Activated CD4-positive, alpha-beta T cell treated with anti-CD3 and anti-CD28 coated beads, Interleukin-2, amount 10 ng/mL, durations not matched to agents 24 days and 14 days (primary cell): ENCODE measurements at regions of chr3 and their contacts with region 1.

Region 1: DNA sequence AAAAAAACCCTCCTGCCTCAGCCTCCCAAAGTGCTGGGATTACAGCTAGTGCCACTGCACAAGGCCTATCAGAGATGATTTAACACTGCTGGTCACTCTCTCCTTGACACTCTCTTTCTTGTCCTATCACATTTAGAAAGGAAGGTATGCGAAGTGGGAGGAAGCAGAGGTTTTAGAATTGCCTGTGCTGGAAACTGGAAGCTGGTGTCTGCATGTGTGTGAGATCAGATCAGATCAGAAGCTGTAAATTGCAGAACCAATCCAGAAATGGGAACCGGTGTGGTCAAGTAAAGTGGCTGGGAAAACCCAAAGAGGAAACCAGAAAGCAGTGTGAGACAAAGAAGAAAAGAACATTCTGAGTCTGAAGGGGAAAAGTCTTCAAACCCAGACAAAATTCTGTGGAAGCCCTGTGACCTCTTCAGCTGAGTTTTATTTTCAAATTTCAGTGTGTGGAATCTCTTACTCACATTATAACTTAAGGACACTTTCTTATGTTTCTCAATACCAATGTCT is 2.8 kb downstream of the EFHB start:
- DNase-seq: peak; percentile 73
- H3K4me3 Mint-ChIP-seq: peak overlapping the region; percentile 52
- H3K27ac Mint-ChIP-seq: peak overlapping the region; percentile 93
- H3K4me1 Mint-ChIP-seq: peaks cover 35% of the 10 kb centered on the region
- H3K27me3 Mint-ChIP-seq: peaks cover 2% of the 10 kb centered on the region

Region 2: DNA sequence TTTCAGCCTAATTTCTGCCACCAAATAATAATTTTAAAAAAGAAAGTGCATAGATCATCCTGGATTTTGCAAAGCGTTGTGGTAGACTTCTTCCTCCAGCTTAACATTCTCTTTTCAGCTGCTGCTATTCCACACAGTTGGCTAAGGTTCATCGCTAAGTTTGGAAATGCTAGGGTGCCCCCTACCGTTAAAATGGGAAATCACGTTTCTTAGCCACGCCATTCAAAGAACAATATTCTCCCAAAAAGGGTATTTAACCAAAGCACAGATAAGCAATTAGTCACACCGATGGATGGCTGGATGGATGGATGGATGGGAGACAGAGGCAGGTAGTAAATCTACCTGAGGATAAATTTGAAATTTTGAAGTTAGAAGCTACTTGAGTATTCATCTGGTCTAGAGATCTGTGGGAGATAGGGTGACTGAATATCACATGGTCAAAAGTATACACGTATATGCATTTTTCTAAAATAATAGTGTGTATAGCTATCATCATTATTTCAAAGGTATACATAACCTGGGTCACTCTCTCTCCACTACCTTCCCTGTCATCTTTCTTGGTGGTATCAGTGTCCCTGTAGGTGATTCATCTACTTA is 64.4 kb before region 1 on chr3:
- intact Hi-C with region 1: no loop called
- DNase-seq: peak; percentile 81
- H3K4me3 Mint-ChIP-seq: no peak overlapping the region
- H3K27ac Mint-ChIP-seq: no peak overlapping the region
- H3K4me1 Mint-ChIP-seq: no peaks in the 10 kb centered on the region
- H3K27me3 Mint-ChIP-seq: peaks cover 15% of the 10 kb centered on the region

Region 3: DNA sequence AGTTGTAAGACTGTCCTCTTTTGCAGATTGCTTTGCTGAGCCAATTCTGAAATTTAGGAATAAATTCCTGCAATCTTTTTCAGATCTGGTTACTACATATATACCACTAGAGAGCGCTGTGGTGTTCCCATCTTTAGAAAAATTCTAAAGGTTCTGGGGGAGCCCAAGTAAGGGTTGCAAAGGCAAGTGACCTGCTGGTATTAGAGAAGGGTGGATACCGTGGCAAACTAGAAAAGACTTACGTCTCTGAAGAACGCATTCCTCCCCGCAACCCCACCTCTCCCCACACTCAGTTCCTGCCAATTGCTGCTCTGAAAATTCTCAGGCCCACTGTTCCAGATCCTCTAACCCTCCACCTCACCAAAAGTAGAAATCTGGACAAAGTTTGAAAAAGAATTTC is 45.8 kb before region 1 on chr3:
- intact Hi-C with region 1: loop called (anchors 2 kb)
- DNase-seq: peak; percentile 63
- H3K4me3 Mint-ChIP-seq: no peak overlapping the region
- H3K27ac Mint-ChIP-seq: no peak overlapping the region
- H3K4me1 Mint-ChIP-seq: peaks cover 6% of the 10 kb centered on the region
- H3K27me3 Mint-ChIP-seq: no peaks in the 10 kb centered on the region

Region 4: GRCh38 chr3:20039766-20040475 is 108.7 kb after region 1 on chr3 and contains the start of gene KAT2B:
- intact Hi-C with region 1: loop called (anchors 1 kb)
- DNase-seq: peak; percentile 94
- H3K4me3 Mint-ChIP-seq: peak within 1 kb of the TSS; percentile 96
- H3K27ac Mint-ChIP-seq: peak within 1 kb of the TSS; percentile 98
- H3K4me1 Mint-ChIP-seq: peaks cover 49% of the 10 kb centered on the region
- H3K27me3 Mint-ChIP-seq: no peaks in the 10 kb centered on the region
- total RNA-seq, gene KAT2B: 23.3 and 27.9 TPM in 2 replicates

Region 5: GRCh38 chr3:20060974-20061685 is 129.9 kb after region 1 on chr3:
- intact Hi-C with region 1: loop called (anchors 1 kb)
- DNase-seq: peak; percentile 68
- H3K4me3 Mint-ChIP-seq: peak overlapping the region; percentile 52
- H3K27ac Mint-ChIP-seq: peak overlapping the region; percentile 69
- H3K4me1 Mint-ChIP-seq: peaks cover 37% of the 10 kb centered on the region
- H3K27me3 Mint-ChIP-seq: no peaks in the 10 kb centered on the region

Region 6: GRCh38 chr3:20185701-20186598 is 254.7 kb after region 1 on chr3 and contains the start of gene SGO1:
- intact Hi-C with region 1: loop called (anchors 1 kb)
- DNase-seq: peak; percentile 100
- H3K4me3 Mint-ChIP-seq: no peak within 1 kb of the TSS
- H3K27ac Mint-ChIP-seq: no peak within 1 kb of the TSS
- H3K4me1 Mint-ChIP-seq: peaks cover 17% of the 10 kb centered on the region
- H3K27me3 Mint-ChIP-seq: no peaks in the 10 kb centered on the region
- total RNA-seq, gene SGO1: 20.0 and 23.6 TPM in 2 replicates